ENCODE measurements at regions of chr3 and their contacts with region 1.

Region 1: GRCh38 chr3:106609666-106610301 is 741.0 kb upstream of the CBLB start:
- DNase-seq: peak; percentile 85
- H3K4me3 Mint-ChIP-seq: no peak overlapping the region
- H3K27ac Mint-ChIP-seq: peak overlapping the region; percentile 65
- H3K4me1 Mint-ChIP-seq: peaks cover 22% of the 10 kb centered on the region
- H3K27me3 Mint-ChIP-seq: no peaks in the 10 kb centered on the region
- CTCF ChIP-seq: peak; percentile 86

Region 2: DNA sequence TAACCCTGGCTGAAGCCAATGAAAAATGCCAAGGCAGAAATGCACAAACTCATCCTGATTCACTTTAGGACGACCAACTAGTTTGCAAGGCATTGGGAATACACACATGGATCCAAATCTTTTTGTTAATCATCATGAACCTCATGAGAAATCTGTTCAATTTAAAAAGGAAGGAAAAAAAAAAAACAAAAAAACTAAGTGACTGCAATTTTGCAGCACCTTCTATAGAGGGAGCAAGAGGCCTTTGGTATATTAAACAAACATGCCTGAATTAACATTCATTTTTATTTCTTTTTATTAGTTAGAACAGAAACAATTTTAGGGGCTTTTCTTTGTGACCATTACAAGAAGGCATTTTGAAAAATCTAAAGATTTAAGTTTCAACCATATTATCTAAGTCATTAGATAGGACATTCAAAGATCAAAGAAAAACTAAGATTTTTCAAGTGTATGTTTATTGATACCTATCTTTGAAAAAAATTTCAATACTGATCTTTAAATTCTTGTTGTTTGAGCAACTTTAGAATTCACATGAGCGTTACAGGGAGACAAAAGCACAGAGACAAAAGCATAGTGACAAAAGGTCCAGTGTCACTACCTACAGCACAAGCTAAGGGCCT is 923.4 kb before region 1 on chr3:
- CTCF ChIA-PET with region 1: interaction called, 21 read pairs
- POLR2A ChIA-PET with region 1: no interaction called
- intact Hi-C with region 1: loop called (anchors 1 kb)
- DNase-seq: peak; percentile 23
- H3K4me3 Mint-ChIP-seq: no peak overlapping the region
- H3K27ac Mint-ChIP-seq: peak overlapping the region; percentile 27
- H3K4me1 Mint-ChIP-seq: peaks cover under 1% of the 10 kb centered on the region
- H3K27me3 Mint-ChIP-seq: no peaks in the 10 kb centered on the region
- CTCF ChIP-seq: peak; percentile 73

Region 3: GRCh38 chr3:106560451-106560966 is 49.3 kb before region 1 on chr3:
- CTCF ChIA-PET with region 1: interaction called, 5 read pairs
- POLR2A ChIA-PET with region 1: interaction called, 12 read pairs
- intact Hi-C with region 1: loop called (anchors 2 kb)
- DNase-seq: peak; percentile 79
- H3K4me3 Mint-ChIP-seq: peak overlapping the region; percentile 10
- H3K27ac Mint-ChIP-seq: peak overlapping the region; percentile 95
- H3K4me1 Mint-ChIP-seq: peaks cover 17% of the 10 kb centered on the region
- H3K27me3 Mint-ChIP-seq: no peaks in the 10 kb centered on the region
- CTCF ChIP-seq: no peak

Region 4: GRCh38 chr3:107064445-107065060 is 454.8 kb after region 1 on chr3:
- CTCF ChIA-PET with region 1: interaction called, 13 read pairs
- POLR2A ChIA-PET with region 1: no interaction called
- intact Hi-C with region 1: loop called (anchors 1 kb)
- DNase-seq: peak; percentile 85
- H3K4me3 Mint-ChIP-seq: no peak overlapping the region
- H3K27ac Mint-ChIP-seq: peak overlapping the region; percentile 29
- H3K4me1 Mint-ChIP-seq: peaks cover 39% of the 10 kb centered on the region
- H3K27me3 Mint-ChIP-seq: no peaks in the 10 kb centered on the region
- CTCF ChIP-seq: peak; percentile 83